Activated CD4-positive, alpha-beta T cell treated with anti-CD3 and anti-CD28 coated beads for 36 hours (primary cell): ENCODE measurements at regions of chr1 and their contacts with region 1.

Region 1: DNA sequence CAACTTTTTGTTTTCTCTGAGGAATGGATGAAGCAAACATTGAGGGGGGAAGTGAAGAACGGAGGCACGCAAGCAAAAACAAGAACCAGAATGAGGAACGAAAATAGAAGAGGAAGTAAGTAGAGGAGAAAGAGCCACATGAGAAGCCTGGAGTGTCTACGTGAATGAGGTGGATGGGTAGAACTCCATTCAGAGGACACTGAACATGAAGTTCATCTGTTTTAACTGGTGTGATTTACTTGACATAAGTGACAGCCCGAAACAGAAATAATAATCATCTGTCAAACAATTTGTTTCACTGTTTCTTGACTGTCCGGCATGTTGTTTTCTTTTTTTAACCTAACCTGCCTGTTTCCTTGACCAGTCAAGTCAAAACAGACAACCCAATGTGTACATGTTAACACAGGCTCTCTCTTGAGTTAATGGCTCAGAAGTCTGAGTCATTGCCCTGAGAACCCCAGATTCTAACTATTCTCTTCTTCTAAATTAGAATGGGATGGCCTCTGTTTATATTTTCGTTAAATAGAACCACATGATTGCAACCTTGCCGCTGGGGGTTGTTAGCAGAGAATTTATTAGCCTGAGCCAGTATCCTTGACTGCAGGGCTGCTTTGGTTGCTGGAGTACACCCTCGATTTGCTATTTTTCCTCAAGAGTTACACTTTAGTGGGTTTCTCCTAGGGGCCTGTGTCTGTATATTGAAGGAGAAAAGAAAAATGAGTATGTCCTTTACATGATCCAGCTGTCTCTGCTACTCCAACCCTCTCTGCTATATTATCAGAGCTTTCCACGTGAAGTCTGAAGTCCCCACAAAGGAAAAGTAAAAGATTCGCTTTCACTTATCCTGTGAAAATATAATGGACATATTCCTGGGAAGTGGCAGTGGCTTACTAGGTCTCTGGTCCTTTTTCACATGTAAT is 151.7 kb downstream of the ZC3H11B start:
- DNase-seq: no peak
- ATAC-seq: no peak
- H3K4me3 Mint-ChIP-seq: no peak overlapping the region
- H3K27ac Mint-ChIP-seq: no peak overlapping the region
- H3K4me1 Mint-ChIP-seq: peaks cover 11% of the 10 kb centered on the region
- H3K27me3 Mint-ChIP-seq: peaks cover 2% of the 10 kb centered on the region

Region 2: GRCh38 chr1:219189021-219189824 is 271.9 kb before region 1 on chr1:
- CTCF ChIA-PET with region 1: interaction called, 3 read pairs
- POLR2A ChIA-PET with region 1: no interaction called
- intact Hi-C with region 1: loop called (anchors 5 kb)
- DNase-seq: no peak
- ATAC-seq: peak; percentile 92
- H3K4me3 Mint-ChIP-seq: no peak overlapping the region
- H3K27ac Mint-ChIP-seq: no peak overlapping the region
- H3K4me1 Mint-ChIP-seq: peaks cover 34% of the 10 kb centered on the region
- H3K27me3 Mint-ChIP-seq: no peaks in the 10 kb centered on the region

Region 3: DNA sequence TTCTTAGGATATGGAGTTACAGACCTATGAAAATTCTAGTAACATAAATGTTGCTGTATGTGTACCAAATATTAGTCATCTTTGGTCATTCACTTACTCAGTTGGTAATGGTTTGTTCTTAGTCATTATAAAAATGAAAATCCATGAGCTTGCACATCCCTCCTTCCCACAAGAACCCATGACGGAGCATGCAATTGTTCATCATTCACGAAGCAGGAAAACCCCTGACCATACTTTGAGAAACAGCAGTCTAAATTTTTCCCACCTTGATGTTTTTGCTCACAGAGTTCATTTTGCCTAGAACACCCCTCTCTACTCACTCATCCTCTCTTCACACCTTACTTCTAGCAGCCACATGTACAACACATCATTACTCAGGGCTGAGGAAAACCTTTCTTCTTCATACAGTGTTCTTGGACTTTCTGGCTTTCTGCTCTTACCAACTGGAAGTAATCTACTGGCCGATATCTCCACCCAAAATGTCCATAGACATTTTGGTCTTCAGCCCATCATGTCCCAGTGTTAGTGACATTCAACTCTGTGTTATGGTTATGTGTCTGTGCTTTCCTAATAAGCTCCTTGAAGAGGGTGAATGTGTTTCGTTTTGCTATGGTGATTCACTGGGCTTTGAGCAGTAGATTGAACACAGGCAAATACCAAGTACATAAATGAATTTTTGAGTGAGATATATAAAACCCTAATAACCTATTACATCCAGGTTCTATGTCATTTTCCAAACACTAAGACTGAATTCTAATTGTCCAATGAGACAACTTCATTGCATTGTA is 38.2 kb before region 1 on chr1:
- CTCF ChIA-PET with region 1: no interaction called
- POLR2A ChIA-PET with region 1: no interaction called
- intact Hi-C with region 1: loop called in 1 of 2 experiments (anchors 2 kb)
- DNase-seq: peak; percentile 20
- ATAC-seq: peak; percentile 83
- H3K4me3 Mint-ChIP-seq: no peak overlapping the region
- H3K27ac Mint-ChIP-seq: peak overlapping the region; percentile 58
- H3K4me1 Mint-ChIP-seq: peaks cover 8% of the 10 kb centered on the region
- H3K27me3 Mint-ChIP-seq: peaks cover 8% of the 10 kb centered on the region

Region 4: GRCh38 chr1:219518168-219518907 is 57.2 kb after region 1 on chr1:
- CTCF ChIA-PET with region 1: no interaction called
- POLR2A ChIA-PET with region 1: no interaction called
- intact Hi-C with region 1: loop called in 1 of 2 experiments (anchors 5 kb)
- DNase-seq: no peak
- ATAC-seq: peak; percentile 39
- H3K4me3 Mint-ChIP-seq: no peak overlapping the region
- H3K27ac Mint-ChIP-seq: no peak overlapping the region
- H3K4me1 Mint-ChIP-seq: no peaks in the 10 kb centered on the region
- H3K27me3 Mint-ChIP-seq: no peaks in the 10 kb centered on the region